Pancreas (tissue), 10 donors: ENCODE measurements at regions of chr4 and their contacts with region 1.

Region 1: GRCh38 chr4:186144142-186144955 is 39.8 kb downstream of the FAM149A start:
- DNase-seq: peak in 5 of 6 donors; percentile 43 to 86 (median 59)
- ATAC-seq: peak; percentile 63 to 79 (median 75)
- H3K4me3 ChIP-seq: peak overlapping the region; percentile 23 to 56 (median 40)
- H3K27ac ChIP-seq: peak overlapping the region in 3 of 4 donors; percentile 44 to 87 (median 81)
- H3K4me1 ChIP-seq: peaks cover 0 to 5% (median 0%) of the 10 kb centered on the region in 3 donors
- H3K27me3 ChIP-seq: no peaks in the 10 kb centered on the region
- CTCF ChIP-seq: no peak

Region 2: GRCh38 chr4:186074189-186074588 is 70.2 kb before region 1 on chr4:
- intact Hi-C with region 1: loop called in 1 of 3 experiments (anchors 10 kb)
- DNase-seq: no peak
- ATAC-seq: peak in 1 of 4 donors; percentile 48
- H3K4me3 ChIP-seq: no peak overlapping the region
- H3K27ac ChIP-seq: no peak overlapping the region
- H3K4me1 ChIP-seq: peaks cover 0 to 11% (median 5%) of the 10 kb centered on the region in 3 donors
- H3K27me3 ChIP-seq: no peaks in the 10 kb centered on the region
- CTCF ChIP-seq: no peak